ENCODE measurements at regions of chr3 and their contacts with region 1.

Region 1: DNA sequence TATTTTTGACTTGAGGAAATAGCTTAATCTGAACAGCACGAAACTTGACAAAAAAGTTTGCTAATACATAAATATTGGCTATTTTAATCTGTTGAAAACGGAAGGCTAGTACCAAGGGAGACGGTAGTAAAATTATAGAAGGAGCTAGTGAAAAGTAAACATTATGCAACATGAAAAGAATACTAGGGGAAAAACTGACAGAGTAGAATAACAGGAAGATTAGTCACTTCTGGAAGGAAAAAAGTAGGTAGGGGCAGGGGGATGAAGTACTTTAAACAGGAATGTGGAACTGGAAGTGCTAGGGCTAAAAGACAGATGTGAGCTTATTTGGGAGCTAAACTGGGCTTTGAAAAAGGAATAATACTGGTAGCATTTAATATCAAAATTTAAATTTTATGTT is 60.1 kb downstream of the MBNL1 start:
- DNase-seq: peak; percentile 71
- ATAC-seq: peak; percentile 71; the same call in 1 of the 2 replicates
- H3K4me3 ChIP-seq: peak overlapping the region in 1 of 2 experiments; percentile 2; a peak in 1 of 4 replicates
- H3K27ac ChIP-seq: peak overlapping the region; percentile 41; the same call in 1 of the 2 replicates
- H3K4me1 ChIP-seq: peaks cover 30% of the 10 kb centered on the region
- H3K27me3 ChIP-seq: no peaks in the 10 kb centered on the region
- CTCF ChIP-seq: no peak

Region 2: GRCh38 chr3:152268555-152269425 is 60.1 kb before region 1 on chr3 and contains the start of gene MBNL1:
- CTCF ChIA-PET with region 1: no interaction called
- POLR2A ChIA-PET with region 1: interaction called, 13 read pairs
- in situ Hi-C with region 1: no loop called
- intact Hi-C with region 1: no loop called
- DNase-seq: peak; percentile 47
- ATAC-seq: peak; percentile 91
- H3K4me3 ChIP-seq: peak within 1 kb of the TSS; percentile 90 to 99
- H3K27ac ChIP-seq: peak within 1 kb of the TSS; percentile 99
- H3K4me1 ChIP-seq: peaks cover 46% of the 10 kb centered on the region
- H3K27me3 ChIP-seq: no peaks in the 10 kb centered on the region
- CTCF ChIP-seq: no peak
- total RNA-seq, gene MBNL1: 140 TPM

Region 3: DNA sequence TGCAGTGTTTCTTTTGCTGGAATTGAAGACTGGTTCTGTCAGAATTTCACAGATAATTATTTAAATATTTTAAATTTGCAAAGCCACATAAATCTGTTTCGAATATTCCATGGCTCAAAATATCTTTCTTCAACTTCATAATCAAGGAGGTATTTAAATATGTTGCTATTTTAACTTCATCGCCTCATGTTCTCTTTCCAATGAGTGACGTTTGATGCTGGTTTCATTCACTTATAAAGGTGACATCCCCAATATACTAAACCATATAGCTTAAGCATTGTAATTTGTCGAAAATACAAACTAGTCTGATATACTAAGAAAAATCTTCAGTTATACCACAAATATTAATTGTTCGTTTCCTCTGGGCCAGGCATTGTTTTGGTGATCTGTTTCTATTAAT is 37.6 kb before region 1 on chr3:
- CTCF ChIA-PET with region 1: no interaction called
- POLR2A ChIA-PET with region 1: interaction called, 13 read pairs
- in situ Hi-C with region 1: no loop called
- intact Hi-C with region 1: no loop called
- DNase-seq: no peak
- ATAC-seq: no peak
- H3K4me3 ChIP-seq: no peak overlapping the region
- H3K27ac ChIP-seq: no peak overlapping the region
- H3K4me1 ChIP-seq: peaks cover 25% of the 10 kb centered on the region
- H3K27me3 ChIP-seq: no peaks in the 10 kb centered on the region
- CTCF ChIP-seq: no peak